ENCODE measurements at regions of chr1 and their contacts with region 1.

Region 1: GRCh38 chr1:235391874-235392273 is 24.6 kb downstream of the TBCE start:
- DNase-seq: no peak
- ATAC-seq: peak; percentile 47; the same call in 2 of the 3 replicates
- H3K4me3 ChIP-seq: no peak overlapping the region
- H3K27ac ChIP-seq: no peak overlapping the region
- H3K4me1 ChIP-seq: no peaks in the 10 kb centered on the region
- H3K27me3 ChIP-seq: no peaks in the 10 kb centered on the region
- CTCF ChIP-seq: no peak
- EP300 ChIP-seq: no peak
- POLR2A ChIP-seq: no peak
- RAD21 ChIP-seq: no peak

Region 2: DNA sequence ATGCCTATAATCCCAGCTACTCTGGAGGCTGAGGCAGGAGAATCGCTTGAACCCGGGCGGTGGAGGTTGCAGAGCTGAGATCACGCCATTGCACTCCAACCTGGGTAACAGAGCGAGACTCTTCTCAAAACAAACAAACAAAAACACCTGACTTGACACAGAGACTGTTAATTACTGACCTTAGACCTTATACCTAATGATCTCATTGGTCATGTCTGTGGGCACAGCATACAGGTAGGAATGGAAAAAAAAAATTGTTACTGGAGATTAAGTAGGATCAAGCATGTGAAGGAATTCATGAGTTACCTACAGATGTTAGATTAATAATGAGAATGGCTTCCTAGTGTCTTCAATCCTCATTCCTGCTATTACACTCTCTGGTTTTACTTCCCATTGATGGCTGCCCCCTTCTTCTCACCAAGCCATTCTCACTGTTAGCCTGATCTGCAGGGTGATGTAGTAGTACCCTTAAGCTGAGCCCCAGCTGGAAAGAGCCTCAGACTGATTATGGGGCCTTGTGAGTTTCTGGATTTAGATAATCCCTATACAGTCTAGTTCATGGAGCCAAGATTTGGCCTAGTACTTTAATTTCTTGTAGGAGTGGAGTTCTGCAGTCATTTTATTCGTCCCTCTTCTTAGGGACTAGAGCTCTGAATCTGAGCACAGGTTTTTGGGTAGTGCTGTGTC is 15.8 kb before region 1 on chr1:
- CTCF ChIA-PET with region 1: no interaction called
- POLR2A ChIA-PET with region 1: interaction called, 12 read pairs
- in situ Hi-C with region 1: no loop called
- intact Hi-C with region 1: no loop called
- DNase-seq: no peak
- ATAC-seq: peak; percentile 29
- H3K4me3 ChIP-seq: no peak overlapping the region
- H3K27ac ChIP-seq: no peak overlapping the region
- H3K4me1 ChIP-seq: no peaks in the 10 kb centered on the region; a peak in 1 of 5 replicates
- H3K27me3 ChIP-seq: no peaks in the 10 kb centered on the region
- CTCF ChIP-seq: no peak
- EP300 ChIP-seq: no peak
- POLR2A ChIP-seq: no peak
- RAD21 ChIP-seq: no peak

Region 3: DNA sequence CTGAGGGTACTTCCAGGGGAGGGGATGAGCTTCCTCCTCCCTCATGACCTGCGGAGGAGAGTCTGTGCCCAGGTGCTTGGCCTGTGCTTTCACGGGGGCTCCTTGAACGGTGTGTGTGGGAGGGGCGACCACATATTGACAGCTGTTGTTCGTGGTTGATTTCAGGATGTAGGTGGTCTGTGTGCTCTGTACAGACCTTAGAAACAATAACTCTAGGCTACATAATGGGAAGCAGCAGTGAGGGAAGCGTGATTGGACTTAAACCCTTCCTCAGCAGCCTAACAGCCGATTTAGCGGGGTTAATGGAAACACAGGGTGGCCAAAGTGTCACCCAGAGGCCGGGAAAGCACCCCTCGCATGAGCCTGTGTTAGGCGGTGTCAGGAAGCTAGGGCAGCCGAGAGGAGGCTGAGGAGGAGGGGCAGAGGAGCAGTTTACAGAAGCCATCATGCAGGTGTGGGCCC is 31.3 kb after region 1 on chr1:
- CTCF ChIA-PET with region 1: no interaction called
- POLR2A ChIA-PET with region 1: no interaction called
- in situ Hi-C with region 1: no loop called
- intact Hi-C with region 1: no loop called
- DNase-seq: no peak
- ATAC-seq: peak; percentile 53
- H3K4me3 ChIP-seq: no peak overlapping the region
- H3K27ac ChIP-seq: no peak overlapping the region
- H3K4me1 ChIP-seq: peaks cover 0 to 8% of the 10 kb centered on the region in 2 experiments; a peak in 2 of 5 replicates
- H3K27me3 ChIP-seq: no peaks in the 10 kb centered on the region
- CTCF ChIP-seq: no peak
- EP300 ChIP-seq: no peak
- POLR2A ChIP-seq: no peak
- RAD21 ChIP-seq: no peak